PC-3 (cell line): ENCODE measurements at regions of chr2 and their contacts with region 1.

Region 1: GRCh38 chr2:68467077-68467960 is at the starts of genes APLF and FBXO48:
- DNase-seq: peak; percentile 99
- ATAC-seq: peak; percentile 90
- H3K4me3 ChIP-seq: peak within 1 kb of the TSS; percentile 86
- H3K27ac ChIP-seq: peak within 1 kb of the TSS; percentile 49
- H3K4me1 ChIP-seq: peaks cover 35% of the 10 kb centered on the region
- H3K27me3 ChIP-seq: no peaks in the 10 kb centered on the region
- CTCF ChIP-seq: no peak
- total RNA-seq, gene APLF: 0.69 and 2.4 TPM in 2 replicates
- total RNA-seq, gene FBXO48: 0.52 and 0.91 TPM in 2 replicates

Region 2: GRCh38 chr2:68594674-68595492 is 127.6 kb after region 1 on chr2:
- CTCF ChIA-PET with region 1: interaction called, 13 read pairs
- POLR2A ChIA-PET with region 1: interaction called, 4 read pairs
- intact Hi-C with region 1: loop called (anchors 2 kb)
- DNase-seq: peak; percentile 66
- ATAC-seq: peak; percentile 74
- H3K4me3 ChIP-seq: peak overlapping the region; percentile 25; the same call in 1 of the 2 replicates
- H3K27ac ChIP-seq: no peak overlapping the region
- H3K4me1 ChIP-seq: peaks cover 11% of the 10 kb centered on the region
- H3K27me3 ChIP-seq: no peaks in the 10 kb centered on the region
- CTCF ChIP-seq: peak; percentile 96

Region 3: DNA sequence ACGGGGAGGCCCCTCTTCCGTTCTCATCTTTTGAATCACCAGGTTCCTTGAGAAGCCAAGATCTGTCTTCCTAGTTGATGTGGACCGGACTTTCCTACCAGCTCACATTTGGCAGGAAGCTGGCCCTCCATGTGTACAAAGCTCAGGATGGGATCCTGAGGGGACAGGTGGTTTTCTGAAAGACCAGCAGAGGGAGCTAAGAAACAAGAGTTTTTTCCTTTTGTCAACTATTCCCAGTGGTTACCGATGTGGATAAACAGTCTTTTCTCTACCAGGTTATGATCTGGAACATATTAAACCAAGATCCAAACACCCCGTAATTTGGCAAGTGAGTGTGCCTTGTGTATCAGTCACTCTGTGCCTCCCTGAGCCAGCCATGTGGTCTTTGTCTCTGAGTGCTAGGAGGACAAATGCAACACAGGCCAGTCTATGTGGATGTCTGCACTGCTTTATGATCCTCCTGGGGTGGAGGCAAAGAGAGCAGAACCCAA is 242.1 kb after region 1 on chr2:
- CTCF ChIA-PET with region 1: interaction called, 11 read pairs
- POLR2A ChIA-PET with region 1: interaction called, 3 read pairs
- intact Hi-C with region 1: no loop called
- DNase-seq: peak; percentile 79
- ATAC-seq: peak; percentile 88
- H3K4me3 ChIP-seq: peak overlapping the region; percentile 7; the same call in 1 of the 2 replicates
- H3K27ac ChIP-seq: no peak overlapping the region
- H3K4me1 ChIP-seq: no peaks in the 10 kb centered on the region; the same call in 1 of the 2 replicates
- H3K27me3 ChIP-seq: peaks cover 14% of the 10 kb centered on the region; the same call in 1 of the 2 replicates
- CTCF ChIP-seq: peak; percentile 85

Region 4: DNA sequence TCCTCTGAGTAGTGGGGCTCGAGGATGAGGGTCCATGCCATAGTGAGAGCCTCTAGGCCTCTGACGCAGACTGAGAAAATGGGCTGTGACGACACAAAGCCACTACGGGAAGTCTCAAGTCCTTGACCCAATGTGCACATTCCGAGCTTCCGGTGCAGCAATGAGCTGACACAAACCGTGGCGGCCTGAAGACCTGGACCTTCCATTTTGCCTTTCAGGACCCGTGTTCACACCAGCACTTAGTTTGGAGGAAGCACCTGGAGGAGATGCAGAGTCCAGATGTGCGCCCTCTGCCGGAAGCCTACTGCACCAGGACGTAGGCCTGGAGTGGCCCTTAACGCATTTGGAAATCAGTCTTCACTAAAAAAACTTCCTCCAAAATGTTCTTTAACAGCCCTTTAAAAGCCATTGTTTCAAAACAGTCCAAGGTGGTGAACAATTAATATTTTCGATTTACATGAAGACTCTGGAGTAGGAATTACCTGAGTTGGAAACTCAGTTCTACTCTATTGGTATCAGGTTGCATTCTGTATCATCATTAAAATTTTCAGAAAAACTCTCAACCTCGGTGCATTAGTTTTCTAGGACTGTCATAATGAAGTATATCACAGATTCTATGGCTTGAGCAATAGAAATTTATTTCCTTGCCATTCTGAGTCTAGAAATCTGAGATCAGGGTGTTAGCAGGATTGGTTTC is 370.0 kb after region 1 on chr2:
- CTCF ChIA-PET with region 1: no interaction called
- POLR2A ChIA-PET with region 1: no interaction called
- intact Hi-C with region 1: loop called (anchors 1 kb)
- DNase-seq: peak; percentile 65
- ATAC-seq: peak; percentile 86
- H3K4me3 ChIP-seq: no peak overlapping the region
- H3K27ac ChIP-seq: no peak overlapping the region
- H3K4me1 ChIP-seq: peaks cover 6% of the 10 kb centered on the region
- H3K27me3 ChIP-seq: no peaks in the 10 kb centered on the region
- CTCF ChIP-seq: peak; percentile 80

Region 5: DNA sequence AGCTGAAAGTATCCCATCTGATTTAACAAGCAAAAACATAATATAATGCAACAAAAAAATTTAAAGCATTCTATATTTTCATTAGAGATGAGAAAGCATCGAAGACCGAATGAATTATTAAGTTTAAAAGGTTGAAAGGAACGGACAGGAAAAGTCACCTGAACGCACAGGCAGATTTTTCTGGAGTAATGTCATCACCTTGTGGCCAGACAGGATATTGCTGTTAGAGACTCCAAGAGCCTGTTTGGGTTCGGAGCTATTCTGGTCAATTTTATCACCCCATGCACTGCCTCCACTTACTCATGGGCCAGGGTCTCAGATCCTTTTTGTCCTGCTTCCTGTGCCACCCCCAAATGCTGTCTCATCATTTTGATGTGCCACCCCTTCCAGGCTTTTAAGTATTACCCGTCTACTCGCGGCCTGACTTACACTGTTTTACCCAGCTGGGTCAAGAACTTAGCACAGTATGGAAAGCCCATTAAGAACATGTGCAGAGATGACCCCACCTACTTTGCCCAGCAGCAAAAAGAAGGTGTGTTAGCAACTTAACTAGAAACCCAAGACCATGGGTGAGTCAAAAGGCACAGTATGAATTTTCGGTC is 458.1 kb after region 1 on chr2:
- CTCF ChIA-PET with region 1: interaction called, 16 read pairs
- POLR2A ChIA-PET with region 1: no interaction called
- intact Hi-C with region 1: loop called (anchors 5 kb)
- DNase-seq: peak; percentile 81
- ATAC-seq: peak; percentile 84
- H3K4me3 ChIP-seq: no peak overlapping the region
- H3K27ac ChIP-seq: no peak overlapping the region
- H3K4me1 ChIP-seq: no peaks in the 10 kb centered on the region; the same call in 1 of the 2 replicates
- H3K27me3 ChIP-seq: no peaks in the 10 kb centered on the region
- CTCF ChIP-seq: peak; percentile 93